Activated CD4-positive, alpha-beta T cell treated with anti-CD3 and anti-CD28 coated beads for 36 hours (primary cell): ENCODE measurements at regions of chr20 and their contacts with region 1.

Region 1: GRCh38 chr20:1325173-1326030 is 3.5 kb downstream of the SDCBP2 start:
- DNase-seq: peak; percentile 99
- ATAC-seq: peak; percentile 83
- H3K4me3 Mint-ChIP-seq: no peak overlapping the region
- H3K27ac Mint-ChIP-seq: no peak overlapping the region
- H3K4me1 Mint-ChIP-seq: peaks cover 28% of the 10 kb centered on the region
- H3K27me3 Mint-ChIP-seq: no peaks in the 10 kb centered on the region

Region 2: DNA sequence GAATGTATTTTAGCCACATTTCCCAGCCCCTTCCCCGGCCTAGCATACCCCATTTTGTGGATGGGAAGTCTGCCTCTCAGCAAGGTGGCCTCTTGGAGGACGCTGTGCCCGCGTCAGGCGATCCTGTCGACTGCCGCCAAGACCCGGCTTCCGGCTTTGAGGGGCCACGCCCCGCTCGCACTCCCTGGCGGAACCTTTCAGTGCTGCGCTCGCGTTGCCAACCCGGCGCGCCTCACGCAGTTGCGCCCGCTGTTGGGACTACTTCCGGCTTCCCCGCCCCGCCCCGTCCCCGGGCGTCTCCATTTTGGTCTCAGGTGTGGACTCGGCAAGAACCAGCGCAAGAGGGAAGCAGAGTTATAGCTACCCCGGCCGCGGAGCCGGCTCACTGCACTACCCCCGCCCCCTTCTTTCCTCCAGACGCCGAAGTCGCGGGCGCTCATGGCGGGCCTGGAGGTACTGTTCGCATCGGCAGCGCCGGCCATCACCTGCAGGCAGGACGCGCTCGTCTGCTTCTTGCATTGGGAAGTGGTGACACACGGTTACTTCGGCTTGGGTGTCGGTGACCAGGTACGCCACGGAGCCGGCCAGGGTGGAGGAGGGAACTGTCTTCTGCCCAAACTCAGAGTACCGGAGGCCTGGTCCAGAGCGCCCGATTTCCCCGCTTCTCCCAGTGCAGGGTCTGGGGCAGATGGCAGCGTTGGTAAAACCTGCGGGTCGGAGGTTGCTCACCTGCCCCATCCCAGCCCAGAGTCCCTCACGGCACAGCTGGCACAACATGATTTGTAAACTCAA is 206.9 kb before region 1 on chr20 and contains the start of gene PSMF1:
- CTCF ChIA-PET with region 1: no interaction called
- POLR2A ChIA-PET with region 1: no interaction called
- intact Hi-C with region 1: loop called in 1 of 2 experiments (anchors 1 kb)
- DNase-seq: peak; percentile 97
- ATAC-seq: peak; percentile 97
- H3K4me3 Mint-ChIP-seq: peak within 1 kb of the TSS; percentile 94
- H3K27ac Mint-ChIP-seq: peak within 1 kb of the TSS; percentile 93
- H3K4me1 Mint-ChIP-seq: peaks cover 49% of the 10 kb centered on the region
- H3K27me3 Mint-ChIP-seq: no peaks in the 10 kb centered on the region
- total RNA-seq, gene PSMF1: 143 to 178 TPM

Region 3: GRCh38 chr20:1225783-1226654 is 99.4 kb before region 1 on chr20 and contains the start of gene RAD21L1:
- CTCF ChIA-PET with region 1: no interaction called
- POLR2A ChIA-PET with region 1: no interaction called
- intact Hi-C with region 1: loop called in 1 of 2 experiments (anchors 1 kb)
- DNase-seq: peak; percentile 94
- ATAC-seq: peak; percentile 85
- H3K4me3 Mint-ChIP-seq: peak within 1 kb of the TSS; percentile 75
- H3K27ac Mint-ChIP-seq: peak within 1 kb of the TSS; percentile 79
- H3K4me1 Mint-ChIP-seq: peaks cover 11% of the 10 kb centered on the region
- H3K27me3 Mint-ChIP-seq: peaks cover 9% of the 10 kb centered on the region
- total RNA-seq, gene RAD21L1: 0.32 TPM in 1 of 2 experiments, not detected in the other

Region 4: GRCh38 chr20:1313236-1313964 is 12.0 kb before region 1 on chr20:
- CTCF ChIA-PET with region 1: interaction called, 14 read pairs
- POLR2A ChIA-PET with region 1: interaction called, 3 read pairs
- intact Hi-C with region 1: no loop called
- DNase-seq: peak; percentile 82
- ATAC-seq: peak; percentile 89
- H3K4me3 Mint-ChIP-seq: no peak overlapping the region
- H3K27ac Mint-ChIP-seq: no peak overlapping the region
- H3K4me1 Mint-ChIP-seq: peaks cover 3% of the 10 kb centered on the region
- H3K27me3 Mint-ChIP-seq: no peaks in the 10 kb centered on the region

Region 5: DNA sequence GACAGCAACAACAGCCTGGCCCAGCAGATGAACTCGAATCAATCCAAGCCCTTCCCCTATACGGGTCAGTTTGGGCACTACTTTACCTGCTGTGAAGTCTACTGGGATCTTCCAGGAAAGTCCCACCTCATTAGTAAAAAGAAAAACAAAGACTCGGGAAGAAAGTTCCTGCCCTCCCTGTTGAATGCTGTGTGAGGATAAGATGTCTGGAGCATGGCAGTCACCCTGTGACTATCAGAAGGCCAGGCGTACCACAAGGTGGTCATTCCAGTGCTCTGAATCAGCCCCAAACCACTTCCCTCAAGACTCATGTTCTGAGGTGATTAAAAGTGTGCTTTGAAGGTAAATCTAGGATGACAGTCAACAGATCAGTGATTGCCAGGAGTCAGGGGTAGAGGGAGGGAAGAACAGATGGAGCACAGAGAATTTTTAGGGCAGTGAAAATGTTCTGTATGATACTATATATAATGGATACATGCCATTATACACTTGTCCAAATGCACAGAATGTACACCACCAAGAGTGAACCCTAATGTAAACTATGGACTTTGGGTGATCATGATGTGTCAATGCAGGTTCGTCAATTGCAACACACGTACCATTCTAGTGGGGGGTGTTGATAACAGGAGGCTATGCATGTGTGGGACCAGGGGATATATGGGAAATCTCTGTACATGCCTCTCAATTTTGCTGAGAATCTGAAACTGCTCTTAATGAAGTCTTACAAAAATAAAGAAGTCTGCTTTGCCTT is 52.8 kb after region 1 on chr20:
- CTCF ChIA-PET with region 1: no interaction called
- POLR2A ChIA-PET with region 1: no interaction called
- intact Hi-C with region 1: loop called in 1 of 2 experiments (anchors 1 kb)
- DNase-seq: peak; percentile 50
- ATAC-seq: peak; percentile 33
- H3K4me3 Mint-ChIP-seq: no peak overlapping the region
- H3K27ac Mint-ChIP-seq: peak overlapping the region; percentile 88
- H3K4me1 Mint-ChIP-seq: peaks cover 84% of the 10 kb centered on the region
- H3K27me3 Mint-ChIP-seq: no peaks in the 10 kb centered on the region

Region 6: DNA sequence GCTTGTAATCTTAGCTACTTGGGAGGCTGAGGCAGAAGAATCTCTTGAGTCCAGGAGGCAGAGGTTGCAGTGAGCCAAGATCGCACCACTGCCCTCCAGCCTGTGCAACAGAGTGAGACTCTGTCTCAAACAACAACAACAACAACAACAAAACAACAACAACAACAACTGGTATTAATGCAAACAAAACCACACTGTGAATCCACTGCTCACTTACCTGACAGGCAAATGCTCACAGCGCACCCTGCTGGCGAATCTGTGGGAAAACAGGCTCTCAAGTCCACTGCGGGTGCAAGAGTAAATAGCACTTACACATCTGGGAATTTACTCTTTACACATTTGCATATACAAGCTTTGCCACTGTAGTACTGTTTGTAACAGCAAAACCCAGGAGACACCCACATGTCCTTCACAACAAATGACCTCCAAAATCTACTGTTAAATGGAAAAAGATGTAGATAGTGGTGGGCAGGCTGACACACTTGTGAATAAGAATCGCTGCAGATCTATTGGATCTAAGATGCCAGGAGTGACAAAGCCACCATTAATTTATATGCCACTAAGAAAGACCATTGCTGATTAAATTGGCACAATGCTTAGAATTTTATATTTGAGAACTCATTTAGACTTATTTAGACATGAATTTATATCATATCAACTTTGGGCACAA is 112.0 kb after region 1 on chr20:
- CTCF ChIA-PET with region 1: interaction called, 8 read pairs
- POLR2A ChIA-PET with region 1: interaction called, 3 read pairs
- intact Hi-C with region 1: loop called (anchors 1 to 5 kb)
- DNase-seq: peak; percentile 89
- ATAC-seq: peak; percentile 56
- H3K4me3 Mint-ChIP-seq: no peak overlapping the region
- H3K27ac Mint-ChIP-seq: no peak overlapping the region
- H3K4me1 Mint-ChIP-seq: peaks cover 27% of the 10 kb centered on the region
- H3K27me3 Mint-ChIP-seq: no peaks in the 10 kb centered on the region

Region 7: DNA sequence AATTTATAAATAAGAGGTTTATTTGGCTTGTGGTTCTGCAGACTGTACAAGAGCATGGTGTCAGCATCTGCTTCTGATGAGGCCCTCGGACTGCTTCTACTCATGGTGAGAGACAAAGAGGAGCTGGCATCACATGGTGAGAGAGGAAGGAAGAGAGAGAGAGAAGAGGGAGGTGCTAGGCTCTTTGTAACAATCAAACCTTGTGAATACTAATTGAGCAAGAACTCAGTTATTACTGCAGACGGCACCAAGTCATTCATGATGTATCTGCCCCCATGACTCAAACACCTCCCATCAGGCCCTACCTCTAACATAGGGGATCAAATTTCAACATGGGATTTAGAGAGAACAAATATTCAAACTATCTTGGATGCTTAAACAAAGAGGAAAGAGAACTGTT is 338.5 kb after region 1 on chr20:
- CTCF ChIA-PET with region 1: no interaction called
- POLR2A ChIA-PET with region 1: no interaction called
- intact Hi-C with region 1: loop called in 1 of 2 experiments (anchors 2 kb)
- DNase-seq: peak; percentile 46
- ATAC-seq: peak; percentile 55
- H3K4me3 Mint-ChIP-seq: peak overlapping the region; percentile 47
- H3K27ac Mint-ChIP-seq: peak overlapping the region; percentile 98
- H3K4me1 Mint-ChIP-seq: peaks cover 96% of the 10 kb centered on the region
- H3K27me3 Mint-ChIP-seq: no peaks in the 10 kb centered on the region